GM12878 (cell line): ENCODE measurements at regions of chr19 and their contacts with region 1.

Region 1: DNA sequence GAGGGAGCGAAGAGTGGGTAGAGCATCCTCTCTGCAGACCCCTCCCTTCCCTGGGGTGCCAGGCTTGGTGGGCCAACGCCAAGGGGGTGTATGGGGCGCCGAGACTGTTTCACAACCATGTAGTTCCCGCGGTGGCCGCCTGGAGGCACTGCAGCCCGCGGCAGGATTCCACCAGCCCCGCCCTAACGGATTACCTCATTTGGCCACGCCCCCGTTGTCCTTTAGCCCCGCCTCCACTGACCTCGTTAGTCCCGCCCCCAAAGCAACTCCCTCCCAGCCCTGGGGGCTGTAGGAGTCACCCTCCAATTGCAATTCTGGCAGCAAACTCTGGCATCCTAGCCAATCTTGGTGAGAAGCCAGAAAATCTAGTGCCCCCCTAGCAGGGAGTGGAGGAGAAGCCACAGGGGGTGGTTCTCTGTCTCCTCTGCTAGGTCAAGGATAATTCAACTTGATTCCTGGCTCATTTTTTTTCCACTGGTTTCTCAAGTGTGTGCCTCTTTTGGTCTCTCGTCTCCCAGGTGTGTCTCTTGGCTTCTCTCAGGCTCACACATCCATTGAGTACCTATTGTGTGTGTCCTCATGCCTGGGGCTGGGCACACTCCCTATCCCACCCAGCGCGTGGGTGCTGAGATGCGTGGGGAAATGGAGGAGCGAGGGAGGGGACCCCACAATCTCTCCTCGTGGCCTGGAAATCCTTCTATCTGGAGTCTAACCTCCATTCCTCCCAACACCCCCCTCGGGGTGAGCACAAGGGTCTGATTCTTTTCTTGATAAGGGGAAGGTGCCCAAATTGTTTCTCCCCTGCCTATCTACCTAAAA is 2.0 kb downstream of the OLFM2 start:
- DNase-seq: no peak
- ATAC-seq: peak; percentile 85
- H3K4me3 ChIP-seq: no peak overlapping the region
- H3K27ac ChIP-seq: no peak overlapping the region
- H3K4me1 ChIP-seq: no peaks in the 10 kb centered on the region
- H3K27me3 ChIP-seq: no peaks in the 10 kb centered on the region
- CTCF ChIP-seq: peak; percentile 96 to 97 (median 97); a peak in 5 of 6 replicates
- EP300 ChIP-seq: peak in 1 of 2 experiments; percentile 12; a peak in 1 of 4 replicates
- POLR2A ChIP-seq: no peak
- RAD21 ChIP-seq: peak; percentile 82

Region 2: GRCh38 chr19:9796113-9796773 is 138.1 kb before region 1 on chr19:
- CTCF ChIA-PET with region 1: no interaction called
- POLR2A ChIA-PET with region 1: no interaction called
- RAD21 ChIA-PET with region 1: no interaction called
- SMC1A ChIA-PET with region 1: no interaction called
- in situ Hi-C with region 1: no loop called
- intact Hi-C with region 1: no loop called
- DNase-seq: peak; percentile 66
- ATAC-seq: peak; percentile 91
- H3K4me3 ChIP-seq: no peak overlapping the region
- H3K27ac ChIP-seq: no peak overlapping the region
- H3K4me1 ChIP-seq: no peaks in the 10 kb centered on the region
- H3K27me3 ChIP-seq: no peaks in the 10 kb centered on the region
- CTCF ChIP-seq: peak; percentile 79 to 94 (median 86)
- EP300 ChIP-seq: no peak
- POLR2A ChIP-seq: no peak
- RAD21 ChIP-seq: peak; percentile 90

Region 3: DNA sequence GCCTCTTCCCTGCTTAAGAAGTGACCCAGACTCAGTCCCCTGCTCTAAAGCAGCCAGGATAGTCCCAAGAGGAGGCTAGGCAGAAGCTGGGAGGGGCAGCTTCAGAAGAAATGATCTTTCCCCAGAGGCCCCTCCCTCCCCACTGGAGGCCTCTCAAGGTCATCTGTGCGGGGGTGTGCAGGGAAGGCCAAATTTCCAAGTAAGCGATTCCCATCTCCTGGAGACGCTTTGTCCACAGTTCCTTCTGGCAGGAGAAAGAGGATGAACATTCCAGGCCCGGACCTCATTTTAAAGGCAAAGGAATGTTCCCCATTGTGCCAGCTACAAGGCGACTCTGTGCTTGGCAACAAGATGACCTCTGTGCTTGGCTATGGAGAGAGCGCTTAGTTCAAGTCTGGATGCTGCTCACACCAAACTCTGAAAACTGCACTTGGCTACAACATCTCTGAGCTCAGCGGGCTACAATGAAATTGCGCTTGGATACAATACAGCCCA is 52.5 kb after region 1 on chr19:
- CTCF ChIA-PET with region 1: interaction called, 12 read pairs
- POLR2A ChIA-PET with region 1: no interaction called
- RAD21 ChIA-PET with region 1: no interaction called
- SMC1A ChIA-PET with region 1: no interaction called
- in situ Hi-C with region 1: no loop called
- intact Hi-C with region 1: no loop called
- DNase-seq: no peak
- ATAC-seq: no peak
- H3K4me3 ChIP-seq: no peak overlapping the region
- H3K27ac ChIP-seq: no peak overlapping the region
- H3K4me1 ChIP-seq: no peaks in the 10 kb centered on the region
- H3K27me3 ChIP-seq: no peaks in the 10 kb centered on the region
- CTCF ChIP-seq: no peak
- EP300 ChIP-seq: no peak
- POLR2A ChIP-seq: no peak
- RAD21 ChIP-seq: no peak

Region 4: GRCh38 chr19:10027158-10027693 is 92.9 kb after region 1 on chr19:
- CTCF ChIA-PET with region 1: interaction called, 99 read pairs
- POLR2A ChIA-PET with region 1: no interaction called
- RAD21 ChIA-PET with region 1: interaction called, 25 read pairs
- SMC1A ChIA-PET with region 1: interaction called, 40 read pairs
- in situ Hi-C with region 1: loop called (anchors 5 kb)
- intact Hi-C with region 1: loop called (anchors 1 kb)
- DNase-seq: no peak
- ATAC-seq: no peak
- H3K4me3 ChIP-seq: no peak overlapping the region
- H3K27ac ChIP-seq: no peak overlapping the region
- H3K4me1 ChIP-seq: no peaks in the 10 kb centered on the region
- H3K27me3 ChIP-seq: peaks cover 0 to 2% of the 10 kb centered on the region in 2 experiments; a peak in 2 of 4 replicates
- CTCF ChIP-seq: no peak
- EP300 ChIP-seq: no peak
- POLR2A ChIP-seq: no peak
- RAD21 ChIP-seq: no peak

Region 5: DNA sequence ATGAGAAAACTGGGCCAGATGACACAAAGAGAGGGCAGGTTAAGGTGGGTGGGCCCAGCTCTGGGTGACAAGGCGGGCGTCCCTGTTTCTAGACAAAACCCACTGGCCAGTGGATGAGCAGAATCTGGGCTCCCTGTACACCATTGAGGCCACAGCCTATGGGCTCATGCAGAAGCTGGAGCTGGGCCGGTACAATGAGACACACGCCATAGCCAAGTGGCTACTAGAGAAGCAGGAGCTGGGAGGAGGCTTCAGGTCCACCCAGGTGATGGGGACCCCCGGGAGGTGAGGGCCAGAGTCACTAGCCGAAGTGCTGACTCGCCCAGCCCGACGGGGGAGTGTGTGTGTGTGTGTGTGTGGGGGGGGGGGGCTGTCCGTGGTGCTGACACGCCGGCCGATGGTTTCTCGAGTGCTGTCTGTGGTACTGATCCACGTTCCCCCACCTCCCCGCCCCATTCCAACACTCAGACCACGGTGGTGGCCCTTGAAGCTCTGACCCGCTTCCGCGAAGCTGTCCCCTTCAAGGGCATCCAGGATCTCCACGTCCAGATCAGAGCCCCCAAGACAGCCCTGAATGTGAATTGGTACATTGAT is 127.5 kb after region 1 on chr19:
- CTCF ChIA-PET with region 1: no interaction called
- POLR2A ChIA-PET with region 1: no interaction called
- RAD21 ChIA-PET with region 1: no interaction called
- SMC1A ChIA-PET with region 1: no interaction called
- in situ Hi-C with region 1: no loop called
- intact Hi-C with region 1: no loop called
- DNase-seq: no peak
- ATAC-seq: no peak
- H3K4me3 ChIP-seq: no peak overlapping the region
- H3K27ac ChIP-seq: no peak overlapping the region
- H3K4me1 ChIP-seq: no peaks in the 10 kb centered on the region
- H3K27me3 ChIP-seq: no peaks in the 10 kb centered on the region; a peak in 1 of 4 replicates
- CTCF ChIP-seq: no peak
- EP300 ChIP-seq: no peak
- POLR2A ChIP-seq: no peak
- RAD21 ChIP-seq: no peak

Region 6: GRCh38 chr19:10259162-10259905 is 325.0 kb after region 1 on chr19:
- CTCF ChIA-PET with region 1: interaction called, 21 read pairs
- POLR2A ChIA-PET with region 1: no interaction called
- RAD21 ChIA-PET with region 1: interaction called, 3 read pairs
- SMC1A ChIA-PET with region 1: no interaction called
- in situ Hi-C with region 1: loop called (anchors 5 kb)
- intact Hi-C with region 1: no loop called
- DNase-seq: no peak
- ATAC-seq: peak; percentile 91
- H3K4me3 ChIP-seq: no peak overlapping the region
- H3K27ac ChIP-seq: 0 out of 2 replicates have a peak overlapping the region, but pooled peaks have one; percentile 27
- H3K4me1 ChIP-seq: peaks cover 11% of the 10 kb centered on the region
- H3K27me3 ChIP-seq: no peaks in the 10 kb centered on the region
- CTCF ChIP-seq: peak; percentile 71 to 75 (median 73)
- EP300 ChIP-seq: no peak
- POLR2A ChIP-seq: peak; percentile 72
- RAD21 ChIP-seq: peak; percentile 74